ENCODE measurements at regions of chr2 and their contacts with region 1.

Region 1: DNA sequence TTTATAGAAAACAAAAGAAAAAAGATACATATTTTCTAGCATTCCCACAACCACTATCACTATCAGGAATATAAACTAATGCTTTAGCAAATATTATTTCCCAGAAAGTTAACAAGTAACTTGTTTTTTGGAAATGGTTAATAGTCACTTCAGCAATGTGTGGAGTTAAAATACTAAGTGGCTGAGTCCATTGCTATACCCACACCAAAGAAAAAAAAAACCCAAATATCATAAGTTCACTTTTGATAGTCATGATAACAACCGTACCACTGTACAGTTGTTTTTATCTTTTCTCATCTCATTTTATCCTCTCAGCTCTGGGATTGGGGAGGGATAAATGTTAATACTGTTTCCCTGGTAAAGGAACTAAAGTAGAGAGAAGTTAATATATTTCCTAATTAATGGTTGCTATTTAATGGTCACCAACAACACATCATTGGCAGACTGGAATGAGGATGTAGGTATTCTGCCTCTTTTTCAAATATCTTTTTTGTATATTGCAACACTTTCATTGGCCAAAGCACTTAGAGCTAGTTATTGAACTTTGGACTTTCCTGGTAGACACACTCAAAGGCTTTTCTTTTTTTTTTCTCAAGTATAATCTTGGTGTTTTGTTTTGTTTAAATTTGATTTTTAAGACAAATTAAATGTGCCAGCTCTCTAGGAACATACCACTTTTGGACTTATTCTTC is 18.4 kb upstream of the KANSL1L start:
- DNase-seq: no peak
- ATAC-seq: peak; percentile 67
- H3K4me3 ChIP-seq: no peak overlapping the region
- H3K4me1 ChIP-seq: no peaks in the 10 kb centered on the region
- CTCF ChIP-seq: no peak

Region 2: DNA sequence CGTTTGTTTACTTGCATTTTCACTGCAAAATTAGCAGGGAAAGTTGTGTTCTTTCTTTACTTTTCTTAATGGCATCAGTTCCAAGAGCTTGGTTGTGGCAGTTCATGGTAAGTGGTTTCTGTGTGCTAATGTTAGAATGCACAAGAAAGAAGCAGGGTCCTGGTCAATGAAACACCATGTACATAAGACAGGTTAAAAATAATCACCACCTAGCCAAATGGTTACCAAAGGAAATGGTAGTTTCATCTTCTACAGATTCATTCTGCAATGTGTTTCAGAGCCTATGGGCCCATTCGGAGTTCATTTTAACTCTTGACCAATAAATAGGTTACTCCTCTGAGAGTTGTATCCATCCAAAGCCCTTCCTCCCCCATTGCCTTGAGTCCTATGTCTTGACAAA is 205.3 kb before region 1 on chr2:
- intact Hi-C with region 1: loop called in 1 of 2 experiments (anchors 5 kb)
- DNase-seq: no peak
- ATAC-seq: no peak
- H3K4me3 ChIP-seq: no peak overlapping the region
- H3K4me1 ChIP-seq: no peaks in the 10 kb centered on the region
- CTCF ChIP-seq: no peak

Region 3: DNA sequence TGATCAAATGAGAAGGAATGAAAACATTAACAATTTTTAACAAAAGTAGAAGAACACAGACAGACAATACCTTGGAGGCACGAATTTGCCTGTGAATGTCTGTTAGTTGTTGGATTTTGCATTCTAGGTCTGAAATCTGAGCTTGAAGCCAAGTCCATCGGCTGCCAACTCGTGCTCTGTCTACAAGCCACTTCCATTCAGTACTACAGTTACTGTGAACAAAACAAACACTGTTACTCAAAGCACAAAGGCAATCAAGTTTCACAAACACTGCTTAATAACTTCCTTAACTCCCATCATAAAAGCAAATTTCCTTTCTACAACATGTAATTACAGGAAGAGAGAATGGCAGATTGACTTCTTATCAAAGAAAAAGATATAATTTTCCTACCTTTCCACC is 60.6 kb before region 1 on chr2:
- intact Hi-C with region 1: no loop called
- DNase-seq: peak in 2 of 3 donors; percentile 40 to 58
- ATAC-seq: peak; percentile 99
- H3K4me3 ChIP-seq: no peak overlapping the region
- H3K4me1 ChIP-seq: no peaks in the 10 kb centered on the region
- CTCF ChIP-seq: no peak